ENCODE measurements at regions of chr3 and their contacts with region 1.

Region 1: DNA sequence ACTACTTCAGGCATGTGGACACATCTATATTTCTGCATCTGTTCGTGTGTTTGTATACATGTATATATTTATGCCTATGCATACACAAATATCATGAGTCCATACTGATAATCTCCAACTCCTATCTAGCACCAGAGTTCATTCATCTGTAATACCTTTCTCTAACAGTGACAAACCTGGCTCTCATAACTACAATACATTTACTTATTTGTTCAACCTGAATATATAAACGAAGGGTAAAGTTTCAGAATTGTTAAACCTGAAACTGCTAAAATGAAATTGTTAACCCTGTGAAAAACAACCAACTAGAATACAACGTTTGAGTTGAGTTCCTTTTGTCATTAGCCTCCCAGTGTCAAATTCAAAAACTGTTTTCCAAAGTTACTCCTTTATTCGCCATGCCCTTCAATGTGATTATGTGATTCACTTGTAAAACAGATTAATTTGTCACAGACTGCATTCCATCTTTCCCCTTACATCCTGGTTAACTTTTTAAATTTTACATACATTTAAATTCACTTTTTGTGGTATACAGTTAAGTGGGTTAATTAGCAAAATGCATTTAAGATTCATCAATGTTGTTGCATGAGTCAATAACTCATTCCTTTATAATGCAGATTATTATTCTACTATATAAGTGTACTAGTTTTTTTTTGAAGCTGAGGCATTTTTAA is 58.5 kb downstream of the PIK3R4 start:
- DNase-seq: no peak
- ATAC-seq: no peak
- H3K4me3 ChIP-seq: no peak overlapping the region
- H3K27ac ChIP-seq: no peak overlapping the region
- H3K4me1 ChIP-seq: no peaks in the 10 kb centered on the region
- H3K27me3 ChIP-seq: no peaks in the 10 kb centered on the region
- CTCF ChIP-seq: no peak

Region 2: GRCh38 chr3:131669590-131669989 is 981.4 kb after region 1 on chr3:
- CTCF ChIA-PET with region 1: no interaction called
- POLR2A ChIA-PET with region 1: interaction called, 13 read pairs
- in situ Hi-C with region 1: no loop called
- intact Hi-C with region 1: no loop called
- DNase-seq: no peak
- ATAC-seq: no peak
- H3K4me3 ChIP-seq: no peak overlapping the region
- H3K27ac ChIP-seq: no peak overlapping the region
- H3K4me1 ChIP-seq: no peaks in the 10 kb centered on the region
- H3K27me3 ChIP-seq: no peaks in the 10 kb centered on the region
- CTCF ChIP-seq: no peak

Measured in Panc1 (cell line).